ENCODE measurements at regions of chr5 and their contacts with region 1.

Region 1: DNA sequence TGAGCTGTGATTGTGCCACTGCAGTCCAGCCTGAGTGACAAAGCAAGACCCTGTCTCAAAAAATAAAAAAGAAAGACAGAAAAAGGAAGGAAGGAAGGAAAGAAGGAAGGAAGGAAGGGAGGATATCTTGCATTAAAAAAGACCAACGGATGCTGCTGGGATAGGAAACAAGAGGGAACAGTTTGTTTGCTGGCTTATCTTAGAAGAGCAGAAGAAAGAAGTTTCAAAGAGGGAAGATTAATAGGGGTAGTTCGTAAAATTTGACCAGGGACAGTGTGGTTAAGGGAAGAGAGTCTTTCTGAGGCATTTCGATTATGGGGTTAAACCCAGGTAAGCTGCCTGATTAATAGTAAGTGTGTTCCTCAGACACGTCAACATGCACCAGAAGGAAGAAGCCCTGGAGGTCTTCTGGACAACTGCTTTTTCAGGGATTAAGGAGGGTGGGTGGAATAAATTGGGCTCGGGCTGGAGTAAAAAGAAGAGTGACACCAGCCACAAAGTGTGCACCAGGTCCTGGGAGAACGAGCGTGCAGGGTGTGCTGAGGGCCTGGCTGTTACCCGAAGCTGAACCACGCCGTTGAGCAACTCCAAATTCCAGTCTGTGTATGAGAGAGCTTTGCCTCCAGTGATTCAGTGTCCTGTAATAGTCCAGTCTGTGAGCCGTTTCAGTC is 24.8 kb downstream of the FYB1 start:
- DNase-seq: no peak
- ATAC-seq: peak; percentile 19
- H3K4me3 Mint-ChIP-seq: peak overlapping the region; percentile 66
- H3K27ac Mint-ChIP-seq: peak overlapping the region; percentile 89
- H3K4me1 Mint-ChIP-seq: peaks cover 69% of the 10 kb centered on the region
- H3K27me3 Mint-ChIP-seq: no peaks in the 10 kb centered on the region
- CTCF ChIP-seq: no peak

Region 2: GRCh38 chr5:39148983-39149534 is 45.5 kb before region 1 on chr5:
- CTCF ChIA-PET with region 1: interaction called, 4 read pairs
- POLR2A ChIA-PET with region 1: interaction called, 3 read pairs
- intact Hi-C with region 1: loop called (anchors 2 kb)
- DNase-seq: no peak
- ATAC-seq: peak; percentile 45
- H3K4me3 Mint-ChIP-seq: no peak overlapping the region
- H3K27ac Mint-ChIP-seq: peak overlapping the region; percentile 90
- H3K4me1 Mint-ChIP-seq: peaks cover 68% of the 10 kb centered on the region
- H3K27me3 Mint-ChIP-seq: no peaks in the 10 kb centered on the region
- CTCF ChIP-seq: peak; percentile 62

Region 3: DNA sequence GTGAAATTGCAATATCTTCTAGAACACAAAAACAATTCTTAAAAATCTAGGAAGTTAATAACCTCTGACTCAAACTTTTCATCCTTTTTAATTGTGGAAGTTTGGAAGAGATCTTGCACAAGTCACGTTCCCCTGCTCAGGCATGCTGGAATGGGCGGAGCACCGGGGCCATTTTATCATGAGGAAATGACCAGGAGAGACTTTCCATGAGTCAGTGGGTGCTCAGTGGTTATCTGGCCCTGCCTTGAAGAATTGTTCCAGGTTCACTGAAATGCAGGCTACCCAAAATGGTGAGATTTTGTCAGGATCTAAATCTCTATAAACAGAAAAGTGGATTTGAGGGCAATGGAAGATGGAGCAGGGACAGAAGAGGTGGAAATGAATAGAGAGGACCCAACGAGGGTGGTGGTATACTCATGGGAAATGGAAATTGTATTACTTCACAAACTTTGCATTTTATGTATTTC is 36.4 kb before region 1 on chr5:
- CTCF ChIA-PET with region 1: interaction called, 11 read pairs
- POLR2A ChIA-PET with region 1: interaction called, 4 read pairs
- intact Hi-C with region 1: no loop called
- DNase-seq: no peak
- ATAC-seq: no peak
- H3K4me3 Mint-ChIP-seq: peak overlapping the region; percentile 24
- H3K27ac Mint-ChIP-seq: peak overlapping the region; percentile 66
- H3K4me1 Mint-ChIP-seq: peaks cover 80% of the 10 kb centered on the region
- H3K27me3 Mint-ChIP-seq: no peaks in the 10 kb centered on the region
- CTCF ChIP-seq: no peak

Region 4: GRCh38 chr5:39164529-39165402 is 29.8 kb before region 1 on chr5:
- CTCF ChIA-PET with region 1: interaction called, 7 read pairs
- POLR2A ChIA-PET with region 1: interaction called, 202 read pairs
- intact Hi-C with region 1: no loop called
- DNase-seq: no peak
- ATAC-seq: peak; percentile 89
- H3K4me3 Mint-ChIP-seq: peak overlapping the region; percentile 67
- H3K27ac Mint-ChIP-seq: peak overlapping the region; percentile 96
- H3K4me1 Mint-ChIP-seq: peaks cover 89% of the 10 kb centered on the region
- H3K27me3 Mint-ChIP-seq: no peaks in the 10 kb centered on the region
- CTCF ChIP-seq: no peak

Region 5: GRCh38 chr5:39238366-39239105 is 43.9 kb after region 1 on chr5:
- CTCF ChIA-PET with region 1: no interaction called
- POLR2A ChIA-PET with region 1: no interaction called
- intact Hi-C with region 1: no loop called
- DNase-seq: no peak
- ATAC-seq: no peak
- H3K4me3 Mint-ChIP-seq: no peak overlapping the region
- H3K27ac Mint-ChIP-seq: peak overlapping the region; percentile 31
- H3K4me1 Mint-ChIP-seq: peaks cover 17% of the 10 kb centered on the region
- H3K27me3 Mint-ChIP-seq: no peaks in the 10 kb centered on the region
- CTCF ChIP-seq: no peak

Region 6: GRCh38 chr5:40240111-40240510 is 1045.5 kb after region 1 on chr5:
- CTCF ChIA-PET with region 1: no interaction called
- POLR2A ChIA-PET with region 1: no interaction called
- intact Hi-C with region 1: no loop called
- DNase-seq: peak; percentile 57
- ATAC-seq: peak; percentile 67
- H3K4me3 Mint-ChIP-seq: no peak overlapping the region
- H3K27ac Mint-ChIP-seq: no peak overlapping the region
- H3K4me1 Mint-ChIP-seq: peaks cover 16% of the 10 kb centered on the region
- H3K27me3 Mint-ChIP-seq: no peaks in the 10 kb centered on the region
- CTCF ChIP-seq: no peak

Measured in activated CD8-positive, alpha-beta T cell treated with anti-CD3 and anti-CD28 coated beads for 36 hours (primary cell).